ENCODE measurements at regions of chr9 and their contacts with region 1.

Region 1: DNA sequence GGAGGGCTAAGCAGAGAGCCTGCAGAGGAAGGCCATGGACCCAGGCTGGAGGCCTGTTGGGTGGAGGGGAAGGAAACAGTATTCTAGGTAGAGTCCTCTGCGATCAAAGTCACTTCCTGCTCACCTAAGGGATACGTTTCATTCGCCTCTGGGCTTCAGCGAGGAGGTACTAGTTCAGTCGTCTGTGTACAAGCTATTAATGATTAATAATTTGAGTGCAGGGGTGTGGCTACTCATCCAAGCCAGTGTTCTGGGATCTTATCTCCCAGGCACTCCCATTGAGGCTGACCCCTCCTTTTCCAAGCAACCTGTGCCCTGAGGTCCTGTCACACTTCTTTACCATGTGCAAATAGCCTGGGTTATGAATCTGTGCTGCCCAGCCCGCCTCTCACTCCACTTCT is 25.2 kb downstream of the RALGPS1 start:
- DNase-seq: no peak
- H3K4me3 Mint-ChIP-seq: no peak overlapping the region
- H3K27ac Mint-ChIP-seq: no peak overlapping the region
- H3K4me1 Mint-ChIP-seq: peaks cover 5% of the 10 kb centered on the region
- H3K27me3 Mint-ChIP-seq: peaks cover 26% of the 10 kb centered on the region

Region 2: DNA sequence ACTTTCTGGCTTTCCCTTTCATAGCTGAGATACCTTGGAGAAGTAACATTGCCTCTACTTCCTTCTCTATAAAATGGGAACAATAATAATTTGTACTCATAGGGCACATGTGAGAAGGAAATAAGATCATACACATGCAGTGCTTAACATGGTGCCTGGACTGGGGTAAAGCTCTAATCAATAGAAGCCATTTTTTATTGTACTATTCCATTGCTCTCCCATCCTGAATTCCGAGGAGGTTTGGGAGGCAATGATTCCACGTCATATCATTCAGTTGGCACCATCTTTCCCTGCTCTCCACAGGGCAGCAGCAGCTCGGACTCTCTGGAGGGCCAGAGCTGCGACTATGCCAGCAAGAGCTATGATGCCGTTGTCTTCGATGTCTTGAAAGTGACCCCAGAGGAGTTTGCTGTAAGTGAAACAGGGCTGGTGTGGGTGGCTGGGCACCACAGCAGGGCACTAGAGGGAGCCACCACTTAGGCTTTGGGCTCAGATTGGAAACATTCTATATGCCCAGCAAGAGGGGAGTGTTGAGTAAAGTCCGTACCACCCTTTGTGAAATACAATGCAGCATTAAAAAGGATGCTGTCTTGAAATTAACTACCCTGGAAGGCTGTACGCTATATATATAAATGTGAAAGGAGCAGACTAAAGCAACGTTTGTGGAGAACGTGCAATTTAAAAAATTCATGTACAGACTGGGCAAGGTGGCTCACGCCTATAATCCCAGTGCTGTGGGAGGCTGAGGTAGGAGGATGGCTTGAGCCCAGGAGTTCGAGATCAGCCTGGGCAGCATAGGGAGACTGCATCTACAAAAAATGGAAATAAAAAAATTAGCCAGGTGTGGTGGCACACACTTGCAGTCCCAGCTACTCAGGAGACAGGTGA is 26.0 kb after region 1 on chr9:
- CTCF ChIA-PET with region 1: interaction called, 10 read pairs
- POLR2A ChIA-PET with region 1: no interaction called
- DNase-seq: peak; percentile 66
- H3K4me3 Mint-ChIP-seq: no peak overlapping the region
- H3K27ac Mint-ChIP-seq: no peak overlapping the region
- H3K4me1 Mint-ChIP-seq: peaks cover 9% of the 10 kb centered on the region
- H3K27me3 Mint-ChIP-seq: peaks cover 8% of the 10 kb centered on the region

Region 3: DNA sequence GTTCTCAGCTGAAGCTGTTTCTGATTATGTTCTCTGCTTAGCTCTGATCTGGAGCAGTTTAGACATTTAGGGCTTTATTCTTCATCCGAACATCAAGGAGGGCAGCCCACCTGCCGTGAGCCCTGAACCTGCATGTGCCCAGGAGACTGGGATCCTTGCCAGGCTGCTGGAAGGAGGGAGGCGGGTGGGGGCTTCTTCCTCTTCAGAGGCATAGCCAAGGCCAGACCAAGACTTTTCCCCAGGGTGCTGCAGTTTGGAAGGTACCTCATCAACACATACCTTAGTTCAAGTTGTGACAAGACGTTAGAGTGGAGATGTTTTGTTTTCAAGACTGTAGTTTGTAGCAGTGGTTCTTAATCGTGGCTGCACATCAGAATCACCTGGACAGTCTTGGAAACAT is 39.6 kb after region 1 on chr9:
- CTCF ChIA-PET with region 1: no interaction called
- POLR2A ChIA-PET with region 1: no interaction called
- DNase-seq: no peak
- H3K4me3 Mint-ChIP-seq: no peak overlapping the region
- H3K27ac Mint-ChIP-seq: no peak overlapping the region
- H3K4me1 Mint-ChIP-seq: peaks cover 29% of the 10 kb centered on the region
- H3K27me3 Mint-ChIP-seq: peaks cover 16% of the 10 kb centered on the region

Region 4: GRCh38 chr9:127199001-127199791 is 259.4 kb after region 1 on chr9:
- CTCF ChIA-PET with region 1: interaction called, 57 read pairs
- POLR2A ChIA-PET with region 1: no interaction called
- DNase-seq: peak; percentile 85
- H3K4me3 Mint-ChIP-seq: no peak overlapping the region
- H3K27ac Mint-ChIP-seq: no peak overlapping the region
- H3K4me1 Mint-ChIP-seq: peaks cover 9% of the 10 kb centered on the region
- H3K27me3 Mint-ChIP-seq: no peaks in the 10 kb centered on the region

Region 5: GRCh38 chr9:127214421-127215267 is 274.8 kb after region 1 on chr9:
- CTCF ChIA-PET with region 1: interaction called, 11 read pairs
- POLR2A ChIA-PET with region 1: interaction called, 3 read pairs
- DNase-seq: peak; percentile 67
- H3K4me3 Mint-ChIP-seq: no peak overlapping the region
- H3K27ac Mint-ChIP-seq: no peak overlapping the region
- H3K4me1 Mint-ChIP-seq: no peaks in the 10 kb centered on the region
- H3K27me3 Mint-ChIP-seq: no peaks in the 10 kb centered on the region

Measured in activated CD4-positive, alpha-beta memory T cell treated with anti-CD3 and anti-CD28 coated beads, Interleukin-2, amount 10 ng/mL, durations not matched to agents 7 days and 5 days (primary cell).